AG04450 (cell line): ENCODE measurements at regions of chr6 and their contacts with region 1.

Region 1: DNA sequence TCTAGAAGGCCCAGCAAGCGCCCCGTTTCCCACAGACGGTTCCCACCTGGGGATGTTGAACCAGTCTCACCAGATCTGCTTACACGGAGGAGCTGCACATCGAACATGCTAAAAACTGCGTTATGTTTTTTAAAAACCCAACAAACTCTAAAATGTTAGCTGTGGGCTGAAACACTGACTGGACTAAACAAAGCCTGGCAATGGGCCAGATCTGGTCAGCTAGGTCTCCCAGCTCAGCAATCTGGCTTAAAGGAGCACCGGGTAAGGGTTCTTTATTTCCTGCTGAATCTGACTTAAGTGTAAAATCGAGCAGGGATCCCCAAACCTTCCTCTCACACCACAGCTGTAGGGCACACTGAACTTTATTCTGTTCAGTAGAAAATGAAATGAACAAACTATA is 156.9 kb downstream of the FOXC1 start:
- DNase-seq: no peak
- H3K4me3 ChIP-seq: no peak overlapping the region
- H3K27ac ChIP-seq: no peak overlapping the region
- H3K27me3 ChIP-seq: no peaks in the 10 kb centered on the region
- CTCF ChIP-seq: no peak

Region 2: DNA sequence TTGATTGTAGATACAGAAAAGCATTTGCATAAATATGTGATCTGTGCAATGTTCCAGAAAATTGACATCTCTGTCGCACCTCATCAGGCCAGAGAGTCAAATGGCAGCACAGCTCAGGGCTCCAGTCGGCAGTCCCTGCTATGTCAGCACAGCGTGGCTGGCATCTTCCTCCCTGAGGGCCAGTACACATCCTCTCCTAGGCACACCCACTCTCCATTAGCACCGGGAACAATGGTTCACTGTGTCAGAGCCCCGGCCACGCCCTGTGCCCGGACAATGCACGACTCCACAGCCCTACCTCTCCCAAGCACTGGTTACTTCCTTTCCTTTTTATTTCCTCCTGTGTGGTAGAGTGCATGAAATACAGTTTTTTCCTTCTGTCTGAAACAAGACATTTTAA is 42.0 kb before region 1 on chr6:
- CTCF ChIA-PET with region 1: no interaction called
- POLR2A ChIA-PET with region 1: interaction called, 12 read pairs
- DNase-seq: no peak
- H3K4me3 ChIP-seq: no peak overlapping the region
- H3K27ac ChIP-seq: no peak overlapping the region
- H3K27me3 ChIP-seq: no peaks in the 10 kb centered on the region
- CTCF ChIP-seq: no peak